Mammary epithelial cell (primary cell): ENCODE measurements at regions of chr3 and their contacts with region 1.

Region 1: DNA sequence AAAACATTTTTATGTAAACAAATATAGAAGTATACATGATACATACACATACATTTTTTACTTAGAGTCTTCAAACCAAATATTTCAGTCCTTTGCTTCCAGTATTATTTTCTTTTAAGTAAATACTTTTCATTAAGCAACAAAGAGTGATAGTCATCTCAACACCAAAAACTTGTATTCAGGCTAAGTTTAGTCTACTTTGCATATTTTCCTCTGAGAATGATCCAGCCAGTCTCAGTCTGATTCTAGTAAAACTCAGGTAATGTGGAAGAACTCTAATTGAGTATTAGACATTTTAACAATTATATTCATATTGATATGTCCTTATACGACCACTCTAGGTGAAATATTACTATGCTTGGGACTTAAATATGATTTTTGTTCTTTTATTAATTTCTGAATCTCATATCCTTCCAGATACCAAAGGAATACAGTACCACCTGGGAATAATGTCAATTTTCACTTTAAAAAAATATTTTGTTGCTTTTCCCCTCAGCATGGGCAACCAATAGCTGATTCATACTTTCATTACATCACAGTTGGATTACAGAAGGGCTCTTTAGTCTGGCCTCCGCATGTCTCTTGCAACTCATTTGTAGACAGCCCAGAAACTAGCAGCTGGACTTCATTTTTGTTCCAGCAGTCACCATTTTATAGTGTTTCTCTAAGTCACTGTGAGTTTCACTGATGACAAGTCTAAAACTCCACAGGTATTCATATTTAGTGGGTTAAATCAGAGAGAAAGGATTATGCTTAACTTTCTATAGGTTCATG is 390.4 kb downstream of the ZBTB20 start:
- DNase-seq: peak; percentile 90
- H3K4me3 ChIP-seq: no peak overlapping the region
- H3K27ac ChIP-seq: peak overlapping the region; percentile 50
- H3K4me1 ChIP-seq: no peaks in the 10 kb centered on the region
- H3K27me3 ChIP-seq: no peaks in the 10 kb centered on the region
- CTCF ChIP-seq: no peak

Region 2: GRCh38 chr3:114527036-114527644 is 229.6 kb before region 1 on chr3:
- CTCF ChIA-PET with region 1: no interaction called
- dilution Hi-C with region 1: no loop called
- in situ Hi-C with region 1: no loop called
- intact Hi-C with region 1: loop called (anchors 5 kb)
- DNase-seq: peak; percentile 17
- H3K4me3 ChIP-seq: no peak overlapping the region
- H3K27ac ChIP-seq: no peak overlapping the region
- H3K4me1 ChIP-seq: no peaks in the 10 kb centered on the region
- H3K27me3 ChIP-seq: no peaks in the 10 kb centered on the region
- CTCF ChIP-seq: peak; percentile 62 to 65

Region 3: GRCh38 chr3:114649331-114649730 is 107.4 kb before region 1 on chr3:
- CTCF ChIA-PET with region 1: interaction called, 3 read pairs
- dilution Hi-C with region 1: no loop called
- in situ Hi-C with region 1: no loop called
- intact Hi-C with region 1: loop called (anchors 10 kb)
- DNase-seq: peak; percentile 85
- H3K4me3 ChIP-seq: no peak overlapping the region
- H3K27ac ChIP-seq: peak overlapping the region; percentile 95
- H3K4me1 ChIP-seq: peaks cover 29% of the 10 kb centered on the region
- H3K27me3 ChIP-seq: no peaks in the 10 kb centered on the region
- CTCF ChIP-seq: no peak

Region 4: GRCh38 chr3:115226844-115227445 is 470.3 kb after region 1 on chr3:
- CTCF ChIA-PET with region 1: no interaction called
- dilution Hi-C with region 1: no loop called
- in situ Hi-C with region 1: no loop called
- intact Hi-C with region 1: no loop called
- DNase-seq: no peak
- H3K4me3 ChIP-seq: no peak overlapping the region
- H3K27ac ChIP-seq: no peak overlapping the region
- H3K4me1 ChIP-seq: no peaks in the 10 kb centered on the region
- H3K27me3 ChIP-seq: no peaks in the 10 kb centered on the region
- CTCF ChIP-seq: no peak